IMR-90 (cell line): ENCODE measurements at regions of chr12 and their contacts with region 1.

Region 1: GRCh38 chr12:26143291-26143690 is 18.5 kb upstream of the BHLHE41 start:
- DNase-seq: no peak
- ATAC-seq: no peak
- H3K4me3 ChIP-seq: no peak overlapping the region
- H3K27ac ChIP-seq: no peak overlapping the region
- H3K4me1 ChIP-seq: no peaks in the 10 kb centered on the region
- H3K27me3 ChIP-seq: peaks cover 18% of the 10 kb centered on the region
- CTCF ChIP-seq: no peak
- POLR2A ChIP-seq: no peak
- RAD21 ChIP-seq: no peak

Region 2: GRCh38 chr12:26177283-26177682 is 34.0 kb after region 1 on chr12:
- CTCF ChIA-PET with region 1: no interaction called
- POLR2A ChIA-PET with region 1: no interaction called
- dilution Hi-C with region 1: no loop called
- in situ Hi-C with region 1: no loop called
- intact Hi-C with region 1: loop called (anchors 5 kb)
- DNase-seq: no peak
- ATAC-seq: no peak
- H3K4me3 ChIP-seq: no peak overlapping the region
- H3K27ac ChIP-seq: no peak overlapping the region
- H3K4me1 ChIP-seq: no peaks in the 10 kb centered on the region
- H3K27me3 ChIP-seq: peaks cover 28% of the 10 kb centered on the region
- CTCF ChIP-seq: no peak
- POLR2A ChIP-seq: no peak
- RAD21 ChIP-seq: no peak